ENCODE measurements at regions of chr2 and their contacts with region 1.

Region 1: GRCh38 chr2:205925373-205926337 is 160.3 kb downstream of the INO80D start:
- DNase-seq: peak; percentile 53 to 68 (median 58)
- H3K4me3 ChIP-seq: peak overlapping the region in 2 of 3 experiments; percentile 15 to 66
- H3K4me3 Mint-ChIP-seq: peak overlapping the region; percentile 55 to 80
- H3K27ac ChIP-seq: no peak overlapping the region
- H3K27ac Mint-ChIP-seq: no peak overlapping the region
- H3K4me1 ChIP-seq: peaks cover 11 to 12% of the 10 kb centered on the region in 2 donors
- H3K4me1 Mint-ChIP-seq: peaks cover 18% of the 10 kb centered on the region
- H3K27me3 ChIP-seq: peaks cover 8 to 18% of the 10 kb centered on the region in 2 donors
- H3K27me3 Mint-ChIP-seq: peaks cover 11 to 33% (median 25%) of the 10 kb centered on the region in 3 donors
- CTCF ChIP-seq: peak; percentile 96

Region 2: DNA sequence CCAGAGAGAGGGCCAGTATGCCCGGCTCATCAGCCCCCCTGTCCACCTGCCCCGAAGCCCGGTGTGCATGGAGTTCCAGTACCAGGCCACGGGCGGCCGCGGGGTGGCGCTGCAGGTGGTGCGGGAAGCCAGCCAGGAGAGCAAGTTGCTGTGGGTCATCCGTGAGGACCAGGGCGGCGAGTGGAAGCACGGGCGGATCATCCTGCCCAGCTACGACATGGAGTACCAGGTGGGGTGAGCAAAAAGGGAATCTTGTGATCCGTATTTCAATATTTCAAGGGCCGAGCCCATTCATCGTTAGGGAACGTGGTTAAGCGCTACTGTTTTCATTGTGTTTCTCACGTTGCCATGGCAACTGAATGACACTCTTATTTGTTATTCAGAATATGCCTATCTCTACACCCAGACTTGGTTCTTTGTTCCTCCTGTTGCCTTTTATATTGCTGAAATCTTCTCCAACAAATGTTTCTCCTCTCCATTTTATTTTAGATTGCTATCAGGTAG is 161.9 kb before region 1 on chr2:
- intact Hi-C with region 1: loop called in 1 of 2 experiments (anchors 5 kb)
- DNase-seq: peak; percentile 8 to 68 (median 46)
- H3K4me3 ChIP-seq: no peak overlapping the region
- H3K4me3 Mint-ChIP-seq: peak overlapping the region in 1 of 2 donors; percentile 31
- H3K27ac ChIP-seq: no peak overlapping the region
- H3K27ac Mint-ChIP-seq: peak overlapping the region in 6 of 7 donors; percentile 6 to 81 (median 74)
- H3K4me1 ChIP-seq: peaks cover 0 to 6% of the 10 kb centered on the region in 2 donors
- H3K4me1 Mint-ChIP-seq: peaks cover 3% of the 10 kb centered on the region
- H3K27me3 ChIP-seq: peaks cover 0 to 24% of the 10 kb centered on the region in 2 donors
- H3K27me3 Mint-ChIP-seq: peaks cover 25 to 34% (median 25%) of the 10 kb centered on the region in 3 donors
- CTCF ChIP-seq: peak; percentile 54

Region 3: GRCh38 chr2:205776139-205776538 is 149.5 kb before region 1 on chr2:
- intact Hi-C with region 1: loop called in 1 of 2 experiments (anchors 5 kb)
- DNase-seq: peak; percentile 11 to 52 (median 26)
- H3K4me3 ChIP-seq: no peak overlapping the region
- H3K4me3 Mint-ChIP-seq: no peak overlapping the region
- H3K27ac ChIP-seq: no peak overlapping the region
- H3K27ac Mint-ChIP-seq: no peak overlapping the region
- H3K4me1 ChIP-seq: no peaks in the 10 kb centered on the region
- H3K4me1 Mint-ChIP-seq: no peaks in the 10 kb centered on the region
- H3K27me3 ChIP-seq: no peaks in the 10 kb centered on the region
- H3K27me3 Mint-ChIP-seq: peaks cover 0 to 8% (median 2%) of the 10 kb centered on the region in 3 donors
- CTCF ChIP-seq: peak; percentile 75

Region 4: DNA sequence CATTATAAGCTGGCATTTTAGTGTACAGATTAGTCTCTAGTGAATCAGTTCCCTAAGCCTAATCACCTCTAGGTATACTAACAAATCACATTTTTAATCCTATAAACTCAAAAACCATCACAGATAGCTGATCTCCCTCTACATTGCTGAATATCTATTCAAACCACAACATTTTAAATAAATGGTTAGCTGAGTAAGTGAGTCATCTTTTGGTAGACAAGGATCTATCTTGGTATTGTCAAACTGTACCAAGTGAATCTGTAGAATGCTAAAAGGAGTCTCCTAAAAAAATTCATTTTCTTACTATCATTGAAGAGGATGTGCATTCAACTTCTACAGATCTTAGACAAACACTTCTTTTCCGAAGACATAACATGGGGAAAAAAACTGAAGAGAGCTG is 119.6 kb after region 1 on chr2:
- intact Hi-C with region 1: no loop called
- DNase-seq: no peak
- H3K4me3 ChIP-seq: no peak overlapping the region
- H3K4me3 Mint-ChIP-seq: no peak overlapping the region
- H3K27ac ChIP-seq: no peak overlapping the region
- H3K27ac Mint-ChIP-seq: peak overlapping the region in 1 of 7 donors; percentile 75
- H3K4me1 ChIP-seq: no peaks in the 10 kb centered on the region
- H3K4me1 Mint-ChIP-seq: no peaks in the 10 kb centered on the region
- H3K27me3 ChIP-seq: no peaks in the 10 kb centered on the region
- H3K27me3 Mint-ChIP-seq: no peaks in the 10 kb centered on the region
- CTCF ChIP-seq: no peak

Measured in CD14-positive monocyte (primary cell).